ENCODE measurements at regions of chr1 and their contacts with region 1.

Region 1: DNA sequence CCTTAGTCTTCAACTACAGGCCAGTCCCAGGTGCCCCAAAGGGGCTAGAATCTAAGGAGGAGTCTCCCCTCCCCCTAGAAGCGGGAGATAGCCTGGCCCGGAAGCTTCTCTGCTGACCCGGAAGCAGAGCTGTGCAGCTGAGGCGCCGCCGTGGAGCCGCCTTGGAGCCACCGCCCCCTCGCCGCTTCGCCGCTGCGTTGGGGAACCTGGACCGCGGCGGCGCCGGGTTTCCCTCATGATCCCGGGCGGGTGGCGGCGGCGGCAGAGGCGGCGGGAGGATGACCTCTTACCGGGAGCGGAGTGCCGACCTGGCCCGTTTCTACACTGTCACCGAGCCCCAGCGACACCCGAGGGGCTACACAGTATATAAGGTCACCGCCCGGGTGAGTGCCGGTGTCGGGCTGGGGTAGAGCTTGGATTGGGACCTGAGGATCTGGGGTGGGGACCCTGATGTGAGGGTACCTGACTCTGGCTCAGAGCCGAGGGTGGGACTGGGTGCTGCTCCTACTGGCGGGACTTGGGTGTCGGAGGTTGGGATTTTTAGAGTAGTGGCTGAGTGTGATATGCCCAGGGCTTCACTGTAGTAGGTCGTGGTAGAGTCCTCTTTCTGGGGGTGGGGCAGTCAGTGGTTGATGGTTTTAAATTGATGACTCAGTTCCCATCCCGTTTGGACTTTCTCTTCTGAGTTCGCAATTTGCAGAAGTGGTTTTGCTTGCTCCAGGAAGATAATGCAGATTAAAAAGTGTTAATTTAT is at the start of gene RPS6KC1:
- DNase-seq: peak; percentile 77
- ATAC-seq: peak; percentile 99
- H3K4me3 ChIP-seq: peak within 1 kb of the TSS; percentile 79 to 92 (median 80)
- H3K27ac ChIP-seq: peak within 1 kb of the TSS; percentile 78
- H3K4me1 ChIP-seq: peaks cover 50% of the 10 kb centered on the region
- H3K27me3 ChIP-seq: no peaks in the 10 kb centered on the region
- CTCF ChIP-seq: peak; percentile 8; the same call in 1 of the 2 replicates
- EP300 ChIP-seq: 0 out of 4 replicates have a peak, but pooled peaks of 1 of the 2 experiments have one; percentile 7
- POLR2A ChIP-seq: peak; percentile 62 to 63; a peak in 3 of 4 replicates
- RAD21 ChIP-seq: no peak
- total RNA-seq, gene RPS6KC1: 25.2 and 30.6 TPM in 2 replicates

Region 2: GRCh38 chr1:212396638-212397037 is 654.7 kb before region 1 on chr1:
- CTCF ChIA-PET with region 1: no interaction called
- POLR2A ChIA-PET with region 1: no interaction called
- in situ Hi-C with region 1: no loop called
- intact Hi-C with region 1: no loop called
- DNase-seq: no peak
- ATAC-seq: no peak
- H3K4me3 ChIP-seq: no peak overlapping the region
- H3K27ac ChIP-seq: no peak overlapping the region
- H3K4me1 ChIP-seq: no peaks in the 10 kb centered on the region
- H3K27me3 ChIP-seq: no peaks in the 10 kb centered on the region
- CTCF ChIP-seq: no peak
- EP300 ChIP-seq: no peak
- POLR2A ChIP-seq: no peak
- RAD21 ChIP-seq: no peak

Region 3: DNA sequence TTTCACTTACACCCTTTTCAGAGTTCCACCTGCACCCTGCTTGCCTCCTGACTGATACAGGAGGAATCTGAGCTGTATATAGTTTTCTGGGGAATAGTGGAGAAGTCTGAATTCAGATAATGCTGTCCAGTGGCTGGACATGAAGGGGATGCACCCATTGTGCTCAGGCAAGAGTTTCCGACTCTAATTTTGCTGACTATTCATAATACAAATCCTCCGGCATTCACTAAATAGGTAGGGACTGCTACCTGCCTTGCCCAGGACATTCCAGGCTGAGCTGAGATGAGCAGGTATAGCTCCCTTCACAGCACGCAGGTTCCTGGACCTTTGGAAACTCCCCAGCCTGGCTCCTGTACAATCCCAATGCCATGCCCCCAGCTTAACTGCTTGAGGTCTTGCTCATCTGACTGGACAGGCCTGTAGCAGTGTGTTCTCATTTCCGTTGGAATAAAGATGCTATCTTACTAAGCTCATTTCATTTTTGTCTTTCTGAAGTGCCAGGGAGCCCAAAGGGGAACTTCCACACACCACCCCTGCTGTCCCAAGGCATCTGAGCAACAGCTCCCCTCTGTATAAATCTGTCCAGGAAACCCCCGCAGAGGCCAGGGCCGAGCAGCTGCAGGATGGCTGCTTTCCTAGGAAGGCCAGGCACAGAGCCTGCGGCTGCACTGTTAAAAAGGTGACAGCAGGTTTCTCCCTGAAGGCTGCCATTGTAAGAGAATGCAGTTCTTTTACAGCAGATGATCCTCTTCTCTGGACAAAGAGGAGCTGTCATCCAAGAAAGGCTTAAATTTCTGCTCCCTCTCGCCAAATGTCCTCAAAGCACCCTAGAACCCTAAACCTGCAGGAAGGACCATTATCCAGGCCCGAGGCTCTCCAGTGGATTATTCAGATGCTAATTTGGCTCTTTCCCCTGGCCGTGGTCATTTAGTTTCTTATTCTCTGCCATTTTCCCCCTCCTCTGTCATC is 122.7 kb before region 1 on chr1:
- CTCF ChIA-PET with region 1: no interaction called
- POLR2A ChIA-PET with region 1: no interaction called
- in situ Hi-C with region 1: no loop called
- intact Hi-C with region 1: loop called (anchors 10 kb)
- DNase-seq: no peak
- ATAC-seq: peak; percentile 61
- H3K4me3 ChIP-seq: no peak overlapping the region; a peak in 1 of 6 replicates
- H3K27ac ChIP-seq: no peak overlapping the region
- H3K4me1 ChIP-seq: peaks cover 35% of the 10 kb centered on the region
- H3K27me3 ChIP-seq: no peaks in the 10 kb centered on the region
- CTCF ChIP-seq: no peak
- EP300 ChIP-seq: no peak
- POLR2A ChIP-seq: no peak
- RAD21 ChIP-seq: no peak

Region 4: DNA sequence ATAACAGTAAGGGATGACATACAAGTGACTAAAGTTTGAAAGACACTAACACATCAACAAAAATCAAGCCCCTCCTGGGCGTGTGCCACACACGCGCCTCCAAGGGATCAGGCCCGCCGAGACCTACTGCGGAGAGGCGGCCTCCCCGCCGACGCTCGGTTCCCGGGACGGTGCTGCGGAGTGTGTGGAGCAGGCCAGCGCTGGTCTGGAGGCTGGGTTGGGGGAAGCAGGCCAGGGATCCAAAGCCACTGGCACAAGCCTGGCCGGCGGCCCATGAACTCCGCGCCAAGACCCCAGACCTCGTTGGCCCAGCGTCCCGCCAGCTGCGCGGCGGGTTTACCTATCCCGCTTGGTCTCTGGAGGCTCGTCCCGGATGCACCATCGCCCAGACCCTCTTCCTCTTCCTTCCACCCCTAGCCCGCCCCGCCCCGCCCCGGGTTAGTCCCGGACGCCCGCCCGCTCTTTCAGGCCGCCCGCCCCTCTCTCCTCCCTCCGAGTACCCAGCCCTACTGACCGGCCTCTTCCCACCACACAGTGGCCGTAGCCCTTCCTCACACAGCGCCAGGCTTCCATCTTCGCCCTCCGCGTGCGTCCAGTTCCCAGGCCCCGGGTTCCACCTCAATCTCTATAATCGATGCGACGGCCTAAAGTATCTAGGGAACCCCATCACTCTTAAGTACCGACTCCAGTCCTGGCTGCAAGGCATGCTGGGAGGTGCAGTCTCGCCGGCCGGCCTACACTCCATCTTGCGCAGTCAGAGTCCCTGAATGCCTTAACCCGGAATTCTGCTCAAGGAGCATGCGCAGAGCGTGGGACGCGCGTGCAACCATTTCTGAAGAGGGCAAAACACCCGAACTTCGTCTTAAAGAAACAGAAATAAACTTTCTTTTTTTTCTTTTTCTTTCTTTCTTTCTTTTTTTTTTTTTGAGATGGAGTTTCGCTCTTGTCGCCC is 35.9 kb before region 1 on chr1 and contains the start of gene ANGEL2:
- CTCF ChIA-PET with region 1: no interaction called
- POLR2A ChIA-PET with region 1: interaction called, 3 read pairs
- in situ Hi-C with region 1: no loop called
- intact Hi-C with region 1: loop called (anchors 5 kb)
- DNase-seq: peak; percentile 95
- ATAC-seq: peak; percentile 95
- H3K4me3 ChIP-seq: peak within 1 kb of the TSS; percentile 62 to 94 (median 91)
- H3K27ac ChIP-seq: peak within 1 kb of the TSS; percentile 89
- H3K4me1 ChIP-seq: peaks cover 32% of the 10 kb centered on the region
- H3K27me3 ChIP-seq: no peaks in the 10 kb centered on the region; a peak in 1 of 5 replicates
- CTCF ChIP-seq: no peak
- EP300 ChIP-seq: no peak; a peak in 1 of 4 replicates
- POLR2A ChIP-seq: peak; percentile 75 to 83
- RAD21 ChIP-seq: peak; percentile 28; the same call in 1 of the 2 replicates
- total RNA-seq, gene ANGEL2: 23.5 and 25.4 TPM in 2 replicates

Measured in HepG2 (cell line).